Activated CD4-positive, alpha-beta memory T cell treated with anti-CD3 and anti-CD28 coated beads for 36 hours (primary cell): ENCODE measurements at regions of chr12 and their contacts with region 1.

Region 1: GRCh38 chr12:1533602-1534304 is 60.6 kb downstream of the FBXL14 start:
- DNase-seq: peak; percentile 85
- H3K4me3 Mint-ChIP-seq: peak overlapping the region; percentile 45
- H3K27ac Mint-ChIP-seq: no peak overlapping the region
- H3K4me1 Mint-ChIP-seq: peaks cover 29% of the 10 kb centered on the region
- H3K27me3 Mint-ChIP-seq: peaks cover 62% of the 10 kb centered on the region

Region 2: DNA sequence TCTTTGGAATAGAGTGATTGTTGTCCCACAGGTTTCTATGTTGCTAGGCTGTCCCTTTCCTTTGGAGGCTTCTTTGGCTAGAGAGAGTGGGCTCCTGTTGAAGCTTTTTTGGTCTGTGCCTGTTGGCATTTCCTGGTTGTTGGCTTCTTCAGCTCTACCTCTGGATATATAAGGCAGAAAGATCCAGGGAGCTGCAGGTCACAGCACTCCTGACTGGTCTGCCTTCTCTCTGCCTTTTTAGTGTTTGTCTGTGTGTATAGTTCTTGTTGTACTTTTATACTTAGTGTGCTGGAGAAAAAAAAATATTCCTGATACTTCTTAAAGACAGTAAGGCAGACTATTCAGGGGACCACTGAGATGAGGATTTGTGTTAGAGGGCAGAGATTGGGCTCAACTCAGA is 142.0 kb before region 1 on chr12:
- CTCF ChIA-PET with region 1: no interaction called
- POLR2A ChIA-PET with region 1: no interaction called
- intact Hi-C with region 1: no loop called
- DNase-seq: no peak
- H3K4me3 Mint-ChIP-seq: no peak overlapping the region
- H3K27ac Mint-ChIP-seq: no peak overlapping the region
- H3K4me1 Mint-ChIP-seq: no peaks in the 10 kb centered on the region
- H3K27me3 Mint-ChIP-seq: no peaks in the 10 kb centered on the region

Region 3: DNA sequence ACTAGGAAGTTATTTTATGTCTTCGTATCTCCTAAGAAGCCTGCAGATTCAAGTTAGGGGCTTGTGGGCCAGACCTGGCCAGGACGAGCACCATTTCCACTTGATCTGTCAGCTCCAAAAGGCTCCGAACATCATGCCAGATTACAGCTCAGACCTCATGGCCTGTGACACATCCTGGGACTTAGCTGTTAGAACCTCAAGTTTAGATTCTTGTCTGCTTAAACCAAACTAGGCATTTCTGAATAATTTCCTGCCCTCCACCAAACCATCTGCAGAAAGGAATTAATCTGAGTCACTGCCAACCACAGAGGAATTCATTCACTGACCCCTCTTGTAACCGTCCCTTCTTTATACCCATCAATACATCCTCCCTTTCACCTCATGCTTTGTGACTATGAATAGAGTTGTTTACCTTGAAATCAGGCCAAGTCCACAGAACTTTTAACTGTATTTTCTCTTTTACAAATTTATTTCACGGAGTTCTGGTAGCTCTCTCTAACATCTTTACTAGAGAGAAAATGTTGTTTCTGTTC is 59.6 kb before region 1 on chr12:
- CTCF ChIA-PET with region 1: no interaction called
- POLR2A ChIA-PET with region 1: interaction called, 3 read pairs
- intact Hi-C with region 1: loop called (anchors 2 kb)
- DNase-seq: peak; percentile 47
- H3K4me3 Mint-ChIP-seq: no peak overlapping the region
- H3K27ac Mint-ChIP-seq: no peak overlapping the region
- H3K4me1 Mint-ChIP-seq: peaks cover 2% of the 10 kb centered on the region
- H3K27me3 Mint-ChIP-seq: no peaks in the 10 kb centered on the region

Region 4: GRCh38 chr12:1553987-1554982 is 20.5 kb after region 1 on chr12:
- CTCF ChIA-PET with region 1: no interaction called
- POLR2A ChIA-PET with region 1: interaction called, 6 read pairs
- intact Hi-C with region 1: loop called (anchors 1 kb)
- DNase-seq: peak; percentile 83
- H3K4me3 Mint-ChIP-seq: no peak overlapping the region
- H3K27ac Mint-ChIP-seq: no peak overlapping the region
- H3K4me1 Mint-ChIP-seq: peaks cover 10% of the 10 kb centered on the region
- H3K27me3 Mint-ChIP-seq: peaks cover 3% of the 10 kb centered on the region

Region 5: DNA sequence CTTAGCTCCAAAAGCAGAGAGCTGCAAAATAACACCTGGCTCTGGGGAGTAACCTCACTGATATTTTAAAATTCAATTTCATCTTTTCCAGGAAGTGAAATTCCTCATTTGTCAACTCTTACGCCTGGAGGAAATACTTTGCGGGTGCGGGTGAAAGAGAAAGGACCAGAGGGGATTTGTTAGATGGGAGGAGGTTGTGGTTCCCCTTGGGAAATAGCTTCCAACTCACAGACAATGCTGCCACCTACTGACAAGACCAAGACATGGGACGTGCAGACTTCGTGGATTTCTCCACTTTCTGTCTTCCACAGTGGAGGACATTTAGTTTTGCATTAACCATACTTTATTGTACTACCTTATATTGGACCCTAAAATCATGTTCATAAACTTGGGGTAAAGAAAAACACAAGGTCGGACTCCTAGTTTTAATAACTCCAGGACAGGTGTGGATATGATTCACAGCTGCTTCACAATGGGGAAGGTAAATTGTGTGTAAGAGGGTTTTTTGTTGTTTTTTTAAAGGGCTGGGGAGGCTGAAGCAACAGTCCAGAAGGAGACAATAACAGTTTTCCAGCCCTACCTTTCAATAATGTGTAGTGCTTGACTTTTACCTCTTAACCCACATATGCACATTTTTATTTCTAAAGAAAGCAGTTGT is 49.8 kb after region 1 on chr12:
- CTCF ChIA-PET with region 1: interaction called, 24 read pairs
- POLR2A ChIA-PET with region 1: no interaction called
- intact Hi-C with region 1: no loop called
- DNase-seq: peak; percentile 75
- H3K4me3 Mint-ChIP-seq: no peak overlapping the region
- H3K27ac Mint-ChIP-seq: no peak overlapping the region
- H3K4me1 Mint-ChIP-seq: peaks cover 17% of the 10 kb centered on the region
- H3K27me3 Mint-ChIP-seq: no peaks in the 10 kb centered on the region

Region 6: DNA sequence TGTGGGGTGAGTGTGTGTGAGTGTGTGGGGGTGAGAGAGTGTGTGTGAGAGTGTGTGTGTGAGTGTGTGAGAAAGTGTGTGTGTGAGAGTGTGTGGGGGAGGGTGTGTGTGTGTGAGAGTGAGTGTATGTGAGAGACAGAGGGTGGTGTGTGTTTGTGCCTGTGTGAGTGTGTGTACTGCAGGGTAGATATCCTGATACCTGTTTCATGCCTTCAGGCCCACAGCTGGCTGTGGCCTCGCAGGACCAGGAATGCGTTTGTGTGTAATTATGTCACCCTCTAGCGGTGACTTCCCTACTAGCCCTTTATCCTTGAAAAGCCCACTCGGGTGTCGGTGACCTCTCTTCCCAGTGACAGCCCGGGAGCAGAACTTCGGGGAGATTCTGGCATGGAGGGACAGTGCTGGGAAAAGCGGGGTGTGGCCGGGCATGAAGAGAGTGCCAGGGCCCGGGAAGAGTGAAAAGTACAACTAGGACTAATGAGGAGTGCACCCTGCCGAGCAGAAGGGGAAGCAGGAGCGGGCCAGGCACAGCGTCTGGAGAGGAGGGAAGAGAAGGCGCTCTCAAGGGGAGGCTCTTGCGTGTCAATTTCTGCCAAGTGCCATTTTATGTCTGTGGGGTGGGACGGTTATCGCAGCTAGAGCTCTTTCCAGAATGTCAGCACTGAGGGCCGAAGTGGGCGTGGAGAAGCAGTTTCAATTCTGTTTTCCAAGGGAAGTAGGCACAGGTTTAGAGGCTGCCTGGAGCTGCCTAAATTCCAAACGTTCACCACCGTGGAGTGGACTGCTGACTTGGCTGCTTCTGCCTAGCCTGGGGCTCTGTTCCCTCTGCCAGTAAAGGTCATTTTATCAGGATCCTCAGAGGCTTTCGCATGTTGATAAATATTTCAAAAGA is 71.6 kb after region 1 on chr12:
- CTCF ChIA-PET with region 1: interaction called, 3 read pairs
- POLR2A ChIA-PET with region 1: no interaction called
- intact Hi-C with region 1: loop called (anchors 5 kb)
- DNase-seq: peak; percentile 67
- H3K4me3 Mint-ChIP-seq: peak overlapping the region; percentile 74
- H3K27ac Mint-ChIP-seq: peak overlapping the region; percentile 25
- H3K4me1 Mint-ChIP-seq: peaks cover 30% of the 10 kb centered on the region
- H3K27me3 Mint-ChIP-seq: no peaks in the 10 kb centered on the region

Region 7: GRCh38 chr12:1719139-1719538 is 185.4 kb after region 1 on chr12:
- CTCF ChIA-PET with region 1: no interaction called
- POLR2A ChIA-PET with region 1: no interaction called
- intact Hi-C with region 1: no loop called
- DNase-seq: no peak
- H3K4me3 Mint-ChIP-seq: no peak overlapping the region
- H3K27ac Mint-ChIP-seq: no peak overlapping the region
- H3K4me1 Mint-ChIP-seq: peaks cover 40% of the 10 kb centered on the region
- H3K27me3 Mint-ChIP-seq: no peaks in the 10 kb centered on the region